ENCODE measurements at regions of chr19 and their contacts with region 1.

Region 1: GRCh38 chr19:48239580-48240141 is 16.1 kb downstream of the CARD8 start:
- DNase-seq: no peak
- H3K4me3 ChIP-seq: no peak overlapping the region
- H3K27ac ChIP-seq: no peak overlapping the region
- H3K4me1 ChIP-seq: peaks cover 6% of the 10 kb centered on the region
- CTCF ChIP-seq: no peak

Region 2: GRCh38 chr19:48194041-48194871 is 45.4 kb before region 1 on chr19:
- CTCF ChIA-PET with region 1: no interaction called
- POLR2A ChIA-PET with region 1: no interaction called
- intact Hi-C with region 1: no loop called
- DNase-seq: peak; percentile 56
- H3K4me3 ChIP-seq: no peak overlapping the region
- H3K27ac ChIP-seq: no peak overlapping the region
- H3K4me1 ChIP-seq: peaks cover 14% of the 10 kb centered on the region
- CTCF ChIP-seq: peak; percentile 78

Region 3: GRCh38 chr19:48221628-48222027 is 18.0 kb before region 1 on chr19:
- CTCF ChIA-PET with region 1: no interaction called
- POLR2A ChIA-PET with region 1: interaction called, 3 read pairs
- intact Hi-C with region 1: loop called (anchors 1 kb)
- DNase-seq: no peak
- H3K4me3 ChIP-seq: no peak overlapping the region
- H3K27ac ChIP-seq: no peak overlapping the region
- H3K4me1 ChIP-seq: no peaks in the 10 kb centered on the region
- CTCF ChIP-seq: no peak

Region 4: DNA sequence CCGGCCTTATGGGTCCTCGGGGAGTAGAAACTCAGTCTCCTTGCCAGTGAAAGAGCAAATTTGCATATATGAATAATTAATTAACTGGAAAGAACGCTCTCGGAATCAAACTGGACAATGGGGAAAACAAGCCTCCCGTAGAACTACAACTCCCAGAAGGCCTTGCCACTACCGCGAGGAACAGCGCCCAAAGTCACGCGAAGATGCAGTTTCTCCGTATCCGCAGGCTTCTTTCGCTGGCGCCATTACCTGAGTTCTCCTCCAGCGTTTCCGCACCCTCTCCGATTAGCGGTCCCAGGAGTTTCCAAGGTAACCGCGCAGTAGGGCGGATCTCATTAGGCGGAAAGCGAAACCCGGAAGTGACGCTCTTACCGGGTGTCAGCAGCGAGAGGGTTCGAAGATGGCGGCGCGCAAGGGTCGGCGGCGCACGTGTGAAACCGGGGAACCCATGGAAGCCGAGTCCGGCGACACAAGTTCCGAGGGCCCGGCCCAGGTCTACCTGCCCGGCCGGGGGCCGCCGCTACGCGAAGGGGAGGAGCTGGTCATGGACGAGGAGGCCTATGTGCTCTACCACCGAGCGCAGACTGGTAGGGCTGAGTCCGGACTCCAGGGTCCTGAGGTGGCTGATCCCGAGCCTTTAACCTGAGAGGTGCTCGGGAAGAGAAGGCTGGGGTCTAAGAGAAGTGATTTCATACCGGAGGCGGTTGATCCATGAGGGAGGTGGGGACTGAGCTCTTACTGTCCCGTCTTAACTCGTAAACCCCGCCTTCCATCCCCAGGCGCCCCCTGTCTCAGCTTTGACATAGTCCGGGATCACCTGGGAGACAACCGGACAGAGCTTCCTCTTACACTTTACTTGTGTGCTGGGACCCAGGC is 206.2 kb after region 1 on chr19 and contains the start of gene GRWD1:
- CTCF ChIA-PET with region 1: no interaction called
- POLR2A ChIA-PET with region 1: no interaction called
- intact Hi-C with region 1: no loop called
- DNase-seq: peak; percentile 95
- H3K4me3 ChIP-seq: peak within 1 kb of the TSS; percentile 97
- H3K27ac ChIP-seq: peak within 1 kb of the TSS; percentile 70
- H3K4me1 ChIP-seq: peaks cover 26% of the 10 kb centered on the region
- CTCF ChIP-seq: peak; percentile 50
- total RNA-seq, gene GRWD1: 34.4 and 35.8 TPM in 2 replicates

Measured in OCI-LY7 (cell line).